IMR-90 (cell line): ENCODE measurements at regions of chr6 and their contacts with region 1.

Region 1: GRCh38 chr6:125995972-125996580 is 9.7 kb downstream of the TRMT11 start:
- DNase-seq: peak; percentile 60
- ATAC-seq: peak; percentile 98
- H3K4me3 ChIP-seq: no peak overlapping the region
- H3K27ac ChIP-seq: no peak overlapping the region
- H3K4me1 ChIP-seq: no peaks in the 10 kb centered on the region
- H3K27me3 ChIP-seq: no peaks in the 10 kb centered on the region
- CTCF ChIP-seq: peak; percentile 94
- POLR2A ChIP-seq: no peak
- RAD21 ChIP-seq: peak; percentile 91

Region 2: GRCh38 chr6:124722141-124722878 is 1273.8 kb before region 1 on chr6:
- CTCF ChIA-PET with region 1: no interaction called
- POLR2A ChIA-PET with region 1: no interaction called
- dilution Hi-C with region 1: no loop called
- in situ Hi-C with region 1: no loop called
- intact Hi-C with region 1: no loop called
- DNase-seq: no peak
- ATAC-seq: no peak
- H3K4me3 ChIP-seq: no peak overlapping the region
- H3K27ac ChIP-seq: no peak overlapping the region
- H3K4me1 ChIP-seq: no peaks in the 10 kb centered on the region
- H3K27me3 ChIP-seq: no peaks in the 10 kb centered on the region
- CTCF ChIP-seq: no peak
- POLR2A ChIP-seq: no peak
- RAD21 ChIP-seq: no peak

Region 3: GRCh38 chr6:126027601-126028000 is 31.5 kb after region 1 on chr6:
- CTCF ChIA-PET with region 1: no interaction called
- POLR2A ChIA-PET with region 1: no interaction called
- dilution Hi-C with region 1: no loop called
- in situ Hi-C with region 1: no loop called
- intact Hi-C with region 1: no loop called
- DNase-seq: peak; percentile 22
- ATAC-seq: no peak
- H3K4me3 ChIP-seq: no peak overlapping the region
- H3K27ac ChIP-seq: no peak overlapping the region
- H3K4me1 ChIP-seq: no peaks in the 10 kb centered on the region
- H3K27me3 ChIP-seq: no peaks in the 10 kb centered on the region
- CTCF ChIP-seq: no peak
- POLR2A ChIP-seq: no peak
- RAD21 ChIP-seq: no peak

Region 4: DNA sequence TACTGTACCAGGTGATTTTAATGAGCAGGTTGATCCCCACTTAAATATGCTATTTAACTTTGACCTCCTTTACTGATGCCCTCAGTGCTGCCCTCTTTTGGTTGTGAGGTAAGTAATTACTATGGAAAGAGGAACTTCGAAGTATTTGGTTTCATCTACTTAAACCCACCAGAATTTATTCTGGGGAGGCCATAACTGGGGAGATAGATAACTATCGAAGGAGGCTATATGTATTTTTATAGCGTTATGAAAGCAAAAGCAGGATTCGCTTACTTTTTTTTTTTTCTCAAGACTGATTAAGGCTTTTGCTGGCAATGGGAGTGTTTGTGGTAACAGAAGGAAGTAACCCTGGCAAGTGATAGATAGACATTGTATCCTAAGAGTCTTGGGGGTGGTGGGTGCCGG is 174.9 kb after region 1 on chr6:
- CTCF ChIA-PET with region 1: no interaction called
- POLR2A ChIA-PET with region 1: no interaction called
- dilution Hi-C with region 1: no loop called
- in situ Hi-C with region 1: no loop called
- intact Hi-C with region 1: loop called (anchors 2 kb)
- DNase-seq: peak; percentile 26
- ATAC-seq: 0 out of 2 replicates have a peak, but pooled peaks have one; percentile 35
- H3K4me3 ChIP-seq: no peak overlapping the region
- H3K27ac ChIP-seq: no peak overlapping the region
- H3K4me1 ChIP-seq: no peaks in the 10 kb centered on the region
- H3K27me3 ChIP-seq: peaks cover 12% of the 10 kb centered on the region
- CTCF ChIP-seq: peak; percentile 49
- POLR2A ChIP-seq: no peak
- RAD21 ChIP-seq: peak; percentile 38

Region 5: GRCh38 chr6:126339796-126340609 is 343.9 kb after region 1 on chr6 and contains the start of gene CENPW:
- CTCF ChIA-PET with region 1: no interaction called
- POLR2A ChIA-PET with region 1: no interaction called
- dilution Hi-C with region 1: no loop called
- in situ Hi-C with region 1: no loop called
- intact Hi-C with region 1: loop called (anchors 10 kb)
- DNase-seq: peak; percentile 86
- ATAC-seq: peak; percentile 96
- H3K4me3 ChIP-seq: peak within 1 kb of the TSS; percentile 83
- H3K27ac ChIP-seq: no peak within 1 kb of the TSS; the same call in 1 of the 2 replicates
- H3K4me1 ChIP-seq: no peaks in the 10 kb centered on the region
- H3K27me3 ChIP-seq: no peaks in the 10 kb centered on the region
- CTCF ChIP-seq: no peak
- POLR2A ChIP-seq: peak; percentile 57; the same call in 1 of the 2 replicates
- RAD21 ChIP-seq: no peak
- total RNA-seq, gene CENPW: 8.2 and 15.0 TPM in 2 replicates

Region 6: GRCh38 chr6:127266178-127266891 is 1270.3 kb after region 1 on chr6 and contains the start of gene RNF146:
- CTCF ChIA-PET with region 1: no interaction called
- POLR2A ChIA-PET with region 1: no interaction called
- dilution Hi-C with region 1: no loop called
- in situ Hi-C with region 1: no loop called
- intact Hi-C with region 1: loop called (anchors 5 kb)
- DNase-seq: peak; percentile 83
- ATAC-seq: peak; percentile 84
- H3K4me3 ChIP-seq: peak within 1 kb of the TSS; percentile 98
- H3K27ac ChIP-seq: peak within 1 kb of the TSS; percentile 98
- H3K4me1 ChIP-seq: no peaks in the 10 kb centered on the region
- H3K27me3 ChIP-seq: no peaks in the 10 kb centered on the region; the same call in 1 of the 2 replicates
- CTCF ChIP-seq: peak; percentile 68
- POLR2A ChIP-seq: no peak
- RAD21 ChIP-seq: peak; percentile 51
- total RNA-seq, gene RNF146: 24.0 and 35.0 TPM in 2 replicates